HCT116 (cell line): ENCODE measurements at regions of chr15 and their contacts with region 1.

Region 1: DNA sequence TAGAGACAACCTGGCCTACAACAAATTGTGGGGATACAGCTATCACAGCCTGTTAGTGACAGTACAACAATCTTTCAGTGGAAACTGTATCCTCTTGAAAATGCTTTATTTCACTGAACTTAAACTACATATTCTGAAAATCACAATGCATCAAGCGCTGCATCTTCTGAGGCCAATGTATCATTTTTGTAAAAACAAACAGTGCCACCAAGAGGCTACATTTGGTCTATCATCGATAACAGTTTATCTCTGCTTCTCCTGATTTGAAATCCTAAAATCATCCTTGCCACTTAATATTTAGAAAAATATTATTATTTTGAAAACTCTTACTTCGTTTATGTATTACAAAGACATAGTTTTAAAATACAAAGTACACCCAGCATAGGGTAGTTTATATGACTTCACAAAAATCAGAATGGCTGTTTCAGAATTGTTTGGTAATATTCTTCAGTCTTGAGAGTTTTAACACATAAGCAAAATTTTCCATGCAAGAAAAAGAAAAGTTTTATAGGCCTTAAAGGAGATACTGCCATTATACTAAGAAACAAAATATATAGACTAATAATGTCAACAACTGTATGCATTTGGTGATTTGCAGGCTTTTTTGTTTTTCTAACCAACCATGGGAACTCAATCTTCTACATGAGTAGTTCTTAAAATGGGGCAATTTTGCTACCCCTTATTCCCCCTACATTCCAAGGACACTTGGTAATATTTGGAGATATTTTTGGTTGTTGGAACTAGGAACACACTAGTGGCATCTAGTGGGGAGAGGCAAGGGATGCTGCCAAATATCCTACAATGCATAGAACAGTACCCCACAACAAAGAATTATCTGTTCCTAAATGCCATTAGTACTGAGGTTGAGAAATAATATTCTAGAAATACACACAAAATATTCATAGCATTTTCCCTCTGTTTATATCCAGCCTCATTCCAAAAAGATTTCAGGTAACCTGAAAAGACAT is 42.3 kb downstream of the WDR72 start:
- DNase-seq: no peak
- ATAC-seq: no peak
- H3K4me3 ChIP-seq: no peak overlapping the region
- H3K27ac ChIP-seq: no peak overlapping the region
- H3K4me1 ChIP-seq: no peaks in the 10 kb centered on the region
- H3K27me3 ChIP-seq: 0 out of 2 replicates have a peak, but pooled peaks cover 3% of the 10 kb centered on the region
- CTCF ChIP-seq: peak in 2 of 3 experiments; percentile 20 to 31; a peak in 3 of 6 replicates
- POLR2A ChIP-seq: no peak
- RAD21 ChIP-seq: peak; percentile 42

Region 2: GRCh38 chr15:52780172-52780980 is 936.8 kb before region 1 on chr15:
- CTCF ChIA-PET with region 1: no interaction called
- POLR2A ChIA-PET with region 1: no interaction called
- RAD21 ChIA-PET with region 1: no interaction called
- intact Hi-C with region 1: loop called (anchors 1 kb)
- DNase-seq: peak; percentile 24
- ATAC-seq: peak; percentile 86
- H3K4me3 ChIP-seq: no peak overlapping the region
- H3K27ac ChIP-seq: no peak overlapping the region
- H3K4me1 ChIP-seq: no peaks in the 10 kb centered on the region
- H3K27me3 ChIP-seq: peaks cover 34% of the 10 kb centered on the region; the same call in 1 of the 2 replicates
- CTCF ChIP-seq: peak; percentile 46 to 98 (median 92); a peak in 5 of 6 replicates
- POLR2A ChIP-seq: no peak
- RAD21 ChIP-seq: peak; percentile 75

Region 3: GRCh38 chr15:53384417-53384816 is 332.8 kb before region 1 on chr15:
- CTCF ChIA-PET with region 1: interaction called, 3 read pairs
- POLR2A ChIA-PET with region 1: no interaction called
- RAD21 ChIA-PET with region 1: no interaction called
- intact Hi-C with region 1: loop called (anchors 1 kb)
- DNase-seq: no peak
- ATAC-seq: peak; percentile 74
- H3K4me3 ChIP-seq: no peak overlapping the region
- H3K27ac ChIP-seq: no peak overlapping the region
- H3K4me1 ChIP-seq: no peaks in the 10 kb centered on the region
- H3K27me3 ChIP-seq: no peaks in the 10 kb centered on the region
- CTCF ChIP-seq: peak; percentile 19 to 58 (median 52); a peak in 5 of 6 replicates
- POLR2A ChIP-seq: no peak
- RAD21 ChIP-seq: peak; percentile 30; the same call in 1 of the 2 replicates

Region 4: DNA sequence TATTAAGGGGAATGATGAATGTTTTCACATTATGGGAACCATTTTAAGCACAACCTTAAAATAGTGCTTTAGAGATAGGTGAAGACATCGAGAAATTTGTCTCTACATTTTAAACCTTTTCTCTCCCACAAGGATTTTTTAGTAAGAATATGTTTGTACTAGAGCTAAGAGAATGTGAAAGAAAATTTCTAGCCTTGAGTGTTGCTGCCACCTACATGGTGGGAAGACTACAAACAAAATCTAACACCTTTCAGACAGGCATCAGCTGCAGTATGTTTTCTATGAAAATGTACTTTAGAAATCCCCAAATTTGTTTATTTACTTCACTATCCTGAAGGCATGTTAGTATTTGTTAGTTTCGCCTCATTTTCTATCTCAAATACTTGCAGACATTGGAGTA is 205.2 kb before region 1 on chr15:
- CTCF ChIA-PET with region 1: no interaction called
- POLR2A ChIA-PET with region 1: no interaction called
- RAD21 ChIA-PET with region 1: no interaction called
- intact Hi-C with region 1: no loop called
- DNase-seq: no peak
- ATAC-seq: no peak
- H3K4me3 ChIP-seq: no peak overlapping the region
- H3K27ac ChIP-seq: no peak overlapping the region
- H3K4me1 ChIP-seq: no peaks in the 10 kb centered on the region
- H3K27me3 ChIP-seq: no peaks in the 10 kb centered on the region
- CTCF ChIP-seq: no peak
- POLR2A ChIP-seq: no peak
- RAD21 ChIP-seq: no peak